Activated CD8-positive, alpha-beta T cell treated with anti-CD3 and anti-CD28 coated beads for 36 hours (primary cell): ENCODE measurements at regions of chr18 and their contacts with region 1.

Region 1: DNA sequence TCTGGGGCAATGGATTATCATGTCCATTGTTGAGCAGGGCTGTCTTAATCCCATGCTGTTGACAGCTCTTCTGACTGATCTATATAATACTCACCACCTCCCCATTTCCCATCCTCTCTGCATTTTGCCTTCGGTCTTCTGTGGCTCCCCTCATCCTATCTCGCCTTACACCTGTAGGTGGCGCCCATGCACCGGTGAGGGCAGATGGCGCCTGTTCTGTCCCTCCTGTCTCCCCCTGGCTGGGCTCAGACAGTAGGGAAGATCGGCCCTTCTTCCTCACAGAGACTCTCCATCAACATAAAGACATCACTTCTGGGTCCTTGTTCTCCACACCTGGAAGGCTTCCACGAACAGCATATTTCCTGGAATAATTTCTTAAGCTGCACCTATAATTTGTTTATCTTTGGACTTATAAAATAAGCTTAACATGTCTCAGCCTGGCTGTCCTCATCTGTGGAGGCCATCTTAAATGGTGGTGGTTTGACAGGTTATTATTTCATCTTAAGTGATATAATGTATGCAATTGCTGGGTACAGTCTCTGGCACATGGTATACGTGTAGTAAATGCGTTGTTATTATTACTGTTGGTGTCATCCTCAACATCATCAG is 10.9 kb upstream of the CDH20 start:
- DNase-seq: peak; percentile 64
- ATAC-seq: peak; percentile 60
- H3K4me3 Mint-ChIP-seq: no peak overlapping the region
- H3K27ac Mint-ChIP-seq: no peak overlapping the region
- H3K4me1 Mint-ChIP-seq: no peaks in the 10 kb centered on the region
- H3K27me3 Mint-ChIP-seq: no peaks in the 10 kb centered on the region
- CTCF ChIP-seq: peak; percentile 72

Region 2: DNA sequence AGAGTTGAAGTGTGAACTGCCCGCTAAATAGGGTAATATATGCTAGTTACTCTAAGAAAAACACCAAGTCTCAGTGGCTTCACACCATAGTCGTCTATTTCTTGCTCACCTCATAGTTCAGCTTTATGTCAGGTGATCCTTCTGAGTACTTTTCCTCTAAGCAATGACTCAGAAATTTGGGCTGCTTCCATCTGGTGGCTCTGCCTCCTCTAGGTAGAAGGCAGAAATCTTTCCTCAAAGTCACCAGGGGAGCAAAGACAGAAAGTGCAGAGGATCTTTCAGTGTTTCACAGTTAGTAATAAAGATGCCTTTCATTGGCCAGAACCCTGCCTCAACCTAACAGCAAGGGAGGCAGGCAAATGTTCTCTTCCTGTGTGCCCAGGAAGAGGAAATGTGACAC is 28.2 kb after region 1 on chr18:
- CTCF ChIA-PET with region 1: no interaction called
- POLR2A ChIA-PET with region 1: no interaction called
- intact Hi-C with region 1: no loop called
- DNase-seq: no peak
- ATAC-seq: no peak
- H3K4me3 Mint-ChIP-seq: no peak overlapping the region
- H3K27ac Mint-ChIP-seq: no peak overlapping the region
- H3K4me1 Mint-ChIP-seq: no peaks in the 10 kb centered on the region
- H3K27me3 Mint-ChIP-seq: no peaks in the 10 kb centered on the region
- CTCF ChIP-seq: no peak

Region 3: GRCh38 chr18:61502472-61502871 is 180.1 kb after region 1 on chr18:
- CTCF ChIA-PET with region 1: interaction called, 32 read pairs
- POLR2A ChIA-PET with region 1: no interaction called
- intact Hi-C with region 1: loop called (anchors 2 kb)
- DNase-seq: peak; percentile 10
- ATAC-seq: no peak
- H3K4me3 Mint-ChIP-seq: no peak overlapping the region
- H3K27ac Mint-ChIP-seq: no peak overlapping the region
- H3K4me1 Mint-ChIP-seq: no peaks in the 10 kb centered on the region
- H3K27me3 Mint-ChIP-seq: peaks cover 6% of the 10 kb centered on the region
- CTCF ChIP-seq: peak; percentile 63